ENCODE measurements at regions of chr6 and their contacts with region 1.

Region 1: GRCh38 chr6:111709615-111710398 is 104.1 kb upstream of the TRAF3IP2 start:
- DNase-seq: peak; percentile 63 to 91
- H3K4me3 ChIP-seq: no peak overlapping the region
- CTCF ChIP-seq: peak in 1 of 3 donors; percentile 65
- POLR2A ChIP-seq: no peak

Region 2: DNA sequence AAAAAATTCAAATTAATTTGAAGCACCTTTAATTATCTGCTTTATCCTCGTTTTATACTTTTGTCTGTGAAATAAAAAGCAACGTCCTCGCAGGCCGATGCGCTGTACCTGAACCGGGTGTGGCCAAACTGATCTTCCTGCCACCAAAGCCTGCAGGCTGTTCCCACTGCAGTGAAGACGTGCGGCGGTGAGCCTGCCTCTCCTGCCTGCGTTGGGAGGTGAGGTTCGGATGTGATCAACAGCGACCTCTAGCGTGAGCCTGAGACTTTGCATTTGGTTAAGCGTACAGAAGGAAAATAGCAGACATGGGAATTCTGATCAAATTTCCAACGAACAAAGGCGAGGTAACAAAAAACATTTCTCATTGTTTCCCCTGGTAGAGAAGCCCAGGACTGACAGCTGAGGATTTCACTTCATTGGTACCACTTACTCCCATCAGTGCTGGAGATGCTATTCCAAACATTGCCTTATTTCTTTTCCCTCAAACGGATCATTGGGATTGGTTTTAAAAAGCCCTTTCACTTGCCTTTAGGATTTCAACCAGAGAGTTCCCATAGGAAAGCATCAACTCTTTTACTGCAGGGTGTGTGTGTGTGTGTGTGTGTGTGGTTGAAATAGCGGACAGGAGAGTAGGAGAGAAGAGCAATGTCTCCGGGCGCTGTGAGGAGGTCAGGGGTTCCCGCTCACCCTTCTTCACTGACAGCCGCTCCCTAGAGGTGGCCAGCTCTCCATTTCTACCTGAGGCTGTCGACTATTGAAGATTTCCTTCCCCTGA is 287.5 kb after region 1 on chr6:
- intact Hi-C with region 1: loop called (anchors 5 kb)
- DNase-seq: peak; percentile 76 to 95
- H3K4me3 ChIP-seq: no peak overlapping the region
- CTCF ChIP-seq: peak in 1 of 3 donors; percentile 89
- POLR2A ChIP-seq: no peak

Region 3: DNA sequence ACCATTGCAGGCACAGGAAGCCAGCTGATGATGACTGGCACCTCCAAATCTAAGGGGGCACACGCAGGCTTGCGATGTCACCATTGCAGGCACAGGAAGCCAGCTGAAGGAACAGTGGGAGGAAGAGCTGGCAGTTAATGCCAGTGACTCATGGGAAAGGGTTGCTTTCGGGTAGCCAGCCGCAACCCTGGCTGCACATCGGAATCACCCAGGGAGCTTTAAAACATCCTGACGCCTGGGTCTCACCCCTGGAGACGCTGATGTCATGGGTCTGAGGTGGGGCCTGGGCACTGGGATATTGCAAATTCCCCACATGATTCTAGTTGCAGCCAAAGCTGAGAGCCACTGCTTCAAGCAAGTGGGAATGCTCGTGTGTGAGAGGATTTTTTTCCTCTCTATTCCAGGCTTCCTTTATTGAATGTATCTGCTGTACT is 328.0 kb after region 1 on chr6:
- intact Hi-C with region 1: loop called (anchors 5 kb)
- DNase-seq: peak; percentile 88 to 96
- H3K4me3 ChIP-seq: no peak overlapping the region
- CTCF ChIP-seq: no peak
- POLR2A ChIP-seq: no peak

Region 4: GRCh38 chr6:112044856-112045255 is 335.0 kb after region 1 on chr6:
- intact Hi-C with region 1: loop called (anchors 5 kb)
- DNase-seq: no peak
- H3K4me3 ChIP-seq: no peak overlapping the region
- CTCF ChIP-seq: no peak
- POLR2A ChIP-seq: no peak

Measured in lower leg skin (tissue), 4 donors.